ENCODE measurements at regions of chr4 and their contacts with region 1.

Region 1: GRCh38 chr4:184188443-184189328 is 29.0 kb downstream of the ENPP6 start:
- DNase-seq: no peak
- H3K4me3 Mint-ChIP-seq: no peak overlapping the region
- H3K27ac Mint-ChIP-seq: no peak overlapping the region
- H3K4me1 Mint-ChIP-seq: no peaks in the 10 kb centered on the region
- H3K27me3 Mint-ChIP-seq: peaks cover 29% of the 10 kb centered on the region

Region 2: DNA sequence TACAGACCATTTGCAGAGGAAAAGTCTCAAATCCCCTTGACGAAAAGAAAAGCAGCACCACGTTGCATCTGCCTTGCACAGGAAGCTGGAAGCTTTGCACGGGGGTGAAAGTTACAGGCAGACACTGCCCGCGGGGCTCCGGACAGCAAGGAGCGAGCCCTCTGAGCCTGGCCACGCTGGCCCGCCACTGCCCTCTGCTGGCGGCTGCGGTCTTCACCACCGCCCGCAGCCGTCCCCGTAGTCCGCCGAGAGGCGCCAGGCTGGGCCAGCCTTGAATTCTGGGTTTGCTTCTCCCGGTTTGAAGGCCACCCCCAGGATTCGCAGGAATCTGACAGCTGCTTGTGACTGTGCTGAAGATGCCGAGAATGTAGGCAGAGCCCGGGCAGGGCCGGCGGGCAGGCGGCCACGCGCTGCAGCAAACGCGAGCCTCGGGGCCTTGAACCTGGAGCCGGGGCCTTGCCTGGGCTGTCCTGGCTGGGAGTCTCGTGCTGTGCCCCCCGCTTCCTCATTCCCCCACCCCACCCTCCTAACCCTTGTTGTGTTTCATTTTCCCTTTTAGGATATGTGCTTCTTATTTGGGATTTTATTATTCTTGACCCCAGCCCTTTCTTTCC is 20.2 kb before region 1 on chr4:
- CTCF ChIA-PET with region 1: interaction called, 10 read pairs
- POLR2A ChIA-PET with region 1: no interaction called
- DNase-seq: peak; percentile 64
- H3K4me3 Mint-ChIP-seq: no peak overlapping the region
- H3K27ac Mint-ChIP-seq: no peak overlapping the region
- H3K4me1 Mint-ChIP-seq: peaks cover 18% of the 10 kb centered on the region
- H3K27me3 Mint-ChIP-seq: peaks cover 58% of the 10 kb centered on the region